AG04450 (cell line): ENCODE measurements at regions of chr11 and their contacts with region 1.

Region 1: GRCh38 chr11:59186130-59186594 is 14.2 kb downstream of the DTX4 start:
- DNase-seq: no peak
- H3K4me3 ChIP-seq: no peak overlapping the region
- H3K27ac ChIP-seq: no peak overlapping the region
- H3K27me3 ChIP-seq: no peaks in the 10 kb centered on the region
- CTCF ChIP-seq: peak; percentile 59

Region 2: GRCh38 chr11:59076876-59077571 is 109.1 kb before region 1 on chr11:
- CTCF ChIA-PET with region 1: no interaction called
- POLR2A ChIA-PET with region 1: no interaction called
- DNase-seq: no peak
- H3K4me3 ChIP-seq: no peak overlapping the region
- H3K27ac ChIP-seq: no peak overlapping the region
- H3K27me3 ChIP-seq: no peaks in the 10 kb centered on the region
- CTCF ChIP-seq: no peak

Region 3: DNA sequence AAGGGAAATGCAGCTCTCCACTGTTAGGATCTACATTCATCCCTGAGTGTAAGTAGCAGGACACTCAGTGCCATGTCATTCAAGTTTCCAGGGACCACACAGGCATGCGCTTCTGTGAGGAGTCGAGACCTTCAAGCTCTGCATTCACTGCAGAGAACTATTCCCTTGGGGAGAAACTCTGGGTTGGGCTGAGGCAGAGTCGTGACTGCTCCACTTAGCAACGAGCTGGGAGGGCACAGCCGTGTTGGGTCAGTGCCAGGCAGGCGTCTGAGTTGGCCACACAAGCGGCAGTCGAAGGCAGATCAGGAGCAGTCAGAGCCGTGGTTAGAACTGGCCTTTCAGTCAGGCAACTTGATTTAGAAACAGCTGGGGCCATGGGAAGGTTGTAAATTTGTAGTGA is 11.8 kb after region 1 on chr11:
- CTCF ChIA-PET with region 1: interaction called, 41 read pairs
- POLR2A ChIA-PET with region 1: interaction called, 5 read pairs
- DNase-seq: no peak
- H3K4me3 ChIP-seq: no peak overlapping the region
- H3K27ac ChIP-seq: no peak overlapping the region
- H3K27me3 ChIP-seq: no peaks in the 10 kb centered on the region
- CTCF ChIP-seq: no peak

Region 4: DNA sequence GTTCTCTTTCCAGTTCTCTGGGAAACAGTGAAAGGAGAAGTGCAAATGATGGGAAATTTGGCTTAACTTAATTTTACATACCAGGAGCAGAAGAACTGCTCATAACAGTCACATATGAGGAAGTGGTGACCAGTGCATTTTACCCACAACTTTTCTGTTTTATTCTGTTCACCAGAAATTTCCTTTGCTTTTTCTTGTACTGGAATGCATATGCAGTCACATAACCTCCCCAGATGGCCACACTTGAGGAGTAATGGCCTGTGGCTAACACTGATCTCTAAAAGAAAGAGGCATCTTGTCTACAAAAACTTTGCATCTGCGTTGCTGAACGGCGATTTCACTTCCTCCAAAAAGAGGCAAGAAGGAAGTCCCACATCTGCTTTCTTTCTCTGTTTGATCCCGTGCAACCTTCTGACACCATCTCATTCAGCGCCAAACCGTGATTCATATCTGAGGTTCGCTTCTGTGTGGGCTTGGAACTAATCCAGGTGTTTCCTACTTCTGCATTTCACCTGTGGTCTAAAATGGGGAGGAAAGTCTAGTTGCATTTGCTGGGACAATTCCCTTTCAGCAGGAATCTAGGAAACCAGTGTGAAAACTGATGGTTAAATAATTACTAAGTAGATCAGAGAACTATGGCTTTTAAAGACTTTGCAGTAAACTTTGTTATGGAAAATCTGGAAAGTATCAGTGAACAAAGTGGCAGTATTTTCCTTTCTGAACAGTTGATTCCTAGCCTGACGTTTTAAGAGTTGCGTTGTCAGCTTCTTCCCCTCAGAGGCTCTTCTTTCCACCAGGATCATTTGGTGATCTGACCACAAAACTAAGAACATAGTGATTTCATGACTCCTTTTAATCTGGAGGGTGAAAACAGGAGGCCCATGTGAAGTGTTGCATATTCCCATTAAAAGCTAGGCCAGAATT is 30.7 kb after region 1 on chr11:
- CTCF ChIA-PET with region 1: interaction called, 34 read pairs
- POLR2A ChIA-PET with region 1: no interaction called
- DNase-seq: no peak
- H3K4me3 ChIP-seq: no peak overlapping the region
- H3K27ac ChIP-seq: no peak overlapping the region
- H3K27me3 ChIP-seq: peaks cover 22% of the 10 kb centered on the region
- CTCF ChIP-seq: no peak